ENCODE measurements at regions of chr18 and their contacts with region 1.

Region 1: DNA sequence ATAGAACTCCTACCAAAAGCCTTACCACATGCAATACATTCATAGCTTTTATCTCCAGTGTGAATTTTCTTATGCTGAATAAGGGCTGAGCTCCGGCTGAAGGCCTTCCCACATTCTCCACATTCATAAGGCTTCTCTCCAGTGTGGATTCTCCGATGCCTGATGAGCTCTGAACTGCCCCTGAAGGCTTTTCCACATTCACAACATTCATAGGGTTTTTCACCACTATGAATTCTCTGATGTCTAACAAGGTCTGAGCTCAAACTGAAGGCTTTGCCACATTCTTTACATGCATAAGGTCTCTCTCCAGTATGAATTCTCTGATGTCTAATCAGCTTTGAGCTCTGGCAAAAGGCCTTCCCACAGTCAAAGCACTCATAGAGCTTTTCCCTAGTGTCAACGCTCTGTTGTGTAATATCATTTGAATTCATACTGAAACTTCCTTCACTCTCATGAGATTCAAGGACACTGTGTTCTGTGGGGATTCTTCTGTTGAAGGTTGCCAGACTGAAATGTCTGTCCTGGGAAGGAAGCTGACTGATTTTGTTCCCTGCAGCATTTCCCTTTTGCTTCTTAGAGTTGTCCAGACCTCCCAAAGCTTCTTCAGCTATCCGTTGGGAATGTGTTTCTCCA is 12.9 kb downstream of the ZNF397 start:
- DNase-seq: no peak
- H3K4me3 ChIP-seq: no peak overlapping the region
- H3K27ac ChIP-seq: no peak overlapping the region
- H3K4me1 ChIP-seq: no peaks in the 10 kb centered on the region
- H3K27me3 ChIP-seq: no peaks in the 10 kb centered on the region
- CTCF ChIP-seq: no peak
- POLR2A ChIP-seq: no peak

Region 2: GRCh38 chr18:35334821-35335220 is 81.0 kb after region 1 on chr18:
- intact Hi-C with region 1: loop called (anchors 5 kb)
- DNase-seq: no peak
- H3K4me3 ChIP-seq: no peak overlapping the region
- H3K27ac ChIP-seq: peak overlapping the region in 1 of 2 donors; percentile 50
- H3K4me1 ChIP-seq: peaks cover 0 to 6% of the 10 kb centered on the region in 2 donors
- H3K27me3 ChIP-seq: no peaks in the 10 kb centered on the region
- CTCF ChIP-seq: no peak
- POLR2A ChIP-seq: no peak

Region 3: GRCh38 chr18:35371412-35372195 is 117.8 kb after region 1 on chr18:
- intact Hi-C with region 1: no loop called
- DNase-seq: no peak
- H3K4me3 ChIP-seq: no peak overlapping the region
- H3K27ac ChIP-seq: no peak overlapping the region
- H3K4me1 ChIP-seq: no peaks in the 10 kb centered on the region
- H3K27me3 ChIP-seq: no peaks in the 10 kb centered on the region
- CTCF ChIP-seq: no peak
- POLR2A ChIP-seq: no peak

Region 4: DNA sequence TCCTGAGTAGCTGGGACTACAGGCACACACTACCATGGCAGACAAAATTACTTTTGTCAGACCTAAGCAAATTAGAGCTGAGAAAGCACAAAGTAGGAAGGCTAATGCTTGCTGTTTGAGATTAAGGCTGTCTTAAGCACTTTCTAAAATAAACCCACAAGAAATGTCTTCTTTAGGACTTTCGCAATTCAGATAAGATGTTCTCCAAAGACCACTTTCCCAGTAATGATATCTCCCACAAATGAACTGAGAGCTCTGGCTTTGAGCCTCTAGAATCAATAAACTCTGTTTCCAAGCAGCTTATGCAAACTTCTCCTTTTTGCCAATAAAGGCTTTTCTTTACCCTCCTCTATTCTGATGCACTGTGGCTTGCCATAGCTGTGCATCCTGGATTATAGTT is 295.8 kb after region 1 on chr18:
- intact Hi-C with region 1: no loop called
- DNase-seq: no peak
- H3K4me3 ChIP-seq: no peak overlapping the region
- H3K27ac ChIP-seq: no peak overlapping the region
- H3K4me1 ChIP-seq: no peaks in the 10 kb centered on the region
- H3K27me3 ChIP-seq: no peaks in the 10 kb centered on the region
- CTCF ChIP-seq: no peak
- POLR2A ChIP-seq: no peak

Measured in breast epithelium (tissue), 4 donors.